Gastrocnemius medialis (tissue), 4 donors: ENCODE measurements at regions of chr9 and their contacts with region 1.

Region 1: DNA sequence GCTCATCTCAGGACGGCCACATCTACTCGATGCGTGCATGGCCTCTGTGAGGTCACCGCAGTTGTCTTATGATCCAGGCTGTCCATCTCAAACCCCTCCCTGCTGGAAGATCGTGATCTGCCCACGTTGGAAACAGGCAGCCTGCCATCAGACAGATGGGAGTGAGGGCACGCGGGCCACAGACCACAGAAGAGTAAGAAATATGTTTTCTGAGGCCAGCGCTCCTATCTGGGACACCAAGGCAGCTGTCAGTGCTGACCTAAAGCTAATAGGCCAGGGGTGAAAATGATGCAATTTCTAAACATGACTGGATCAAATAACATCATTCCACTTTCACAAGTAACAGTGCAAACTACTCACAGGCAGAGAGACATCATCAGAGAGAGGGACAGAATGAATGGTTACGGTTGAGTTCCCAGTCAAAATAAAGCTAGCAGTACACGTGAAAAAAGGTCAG is 57.1 kb upstream of the CER1 start:
- DNase-seq: peak; percentile 66 to 79
- ATAC-seq: peak; percentile 70 to 78
- H3K4me3 ChIP-seq: peak overlapping the region; percentile 20 to 34 (median 28)
- H3K27ac ChIP-seq: peak overlapping the region; percentile 77 to 94 (median 88)
- H3K4me1 ChIP-seq: peaks cover 27 to 51% of the 10 kb centered on the region in 2 donors
- H3K27me3 ChIP-seq: no peaks in the 10 kb centered on the region
- CTCF ChIP-seq: no peak
- POLR2A ChIP-seq: peak; percentile 28 to 58

Region 2: DNA sequence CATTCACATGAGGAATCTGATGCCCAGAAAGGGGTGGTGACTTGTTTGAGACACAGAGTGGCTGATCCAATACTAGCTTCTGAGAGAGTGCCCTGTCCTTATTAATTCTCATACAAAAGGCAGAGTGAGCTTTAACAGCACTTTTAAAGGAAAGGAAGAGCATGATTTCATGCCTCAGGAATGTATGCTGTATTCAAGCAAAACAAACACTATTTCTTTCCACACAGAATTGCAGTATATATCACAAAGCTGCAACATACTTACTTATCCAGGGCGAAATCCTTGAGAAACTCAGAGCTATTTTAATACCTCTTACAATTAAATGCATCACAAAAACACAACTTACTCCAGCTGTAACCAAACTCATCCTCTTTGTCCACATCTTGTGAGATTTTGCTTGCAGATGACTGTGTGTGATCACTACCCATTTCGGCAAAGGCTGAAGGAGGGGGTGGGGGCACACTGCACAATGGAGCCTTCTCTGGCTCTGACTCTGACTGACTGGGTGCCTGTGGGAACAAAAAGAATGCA is 1639.9 kb before region 1 on chr9:
- in situ Hi-C with region 1: no loop called
- intact Hi-C with region 1: loop called (anchors 10 kb)
- DNase-seq: no peak
- ATAC-seq: no peak
- H3K4me3 ChIP-seq: no peak overlapping the region
- H3K27ac ChIP-seq: no peak overlapping the region
- H3K4me1 ChIP-seq: peaks cover 29 to 35% of the 10 kb centered on the region in 2 donors
- H3K27me3 ChIP-seq: no peaks in the 10 kb centered on the region
- CTCF ChIP-seq: no peak
- POLR2A ChIP-seq: no peak

Region 3: GRCh38 chr9:14400658-14400995 is 379.0 kb before region 1 on chr9:
- in situ Hi-C with region 1: no loop called
- intact Hi-C with region 1: loop called (anchors 1 kb)
- DNase-seq: peak; percentile 19 to 55
- ATAC-seq: peak; percentile 74 to 85
- H3K4me3 ChIP-seq: peak overlapping the region in 2 of 4 donors; percentile 10 to 39
- H3K27ac ChIP-seq: peak overlapping the region; percentile 2 to 62 (median 10)
- H3K4me1 ChIP-seq: peaks cover 5 to 33% of the 10 kb centered on the region in 2 donors
- H3K27me3 ChIP-seq: no peaks in the 10 kb centered on the region
- CTCF ChIP-seq: peak; percentile 40 to 68 (median 56)
- POLR2A ChIP-seq: no peak

Region 4: DNA sequence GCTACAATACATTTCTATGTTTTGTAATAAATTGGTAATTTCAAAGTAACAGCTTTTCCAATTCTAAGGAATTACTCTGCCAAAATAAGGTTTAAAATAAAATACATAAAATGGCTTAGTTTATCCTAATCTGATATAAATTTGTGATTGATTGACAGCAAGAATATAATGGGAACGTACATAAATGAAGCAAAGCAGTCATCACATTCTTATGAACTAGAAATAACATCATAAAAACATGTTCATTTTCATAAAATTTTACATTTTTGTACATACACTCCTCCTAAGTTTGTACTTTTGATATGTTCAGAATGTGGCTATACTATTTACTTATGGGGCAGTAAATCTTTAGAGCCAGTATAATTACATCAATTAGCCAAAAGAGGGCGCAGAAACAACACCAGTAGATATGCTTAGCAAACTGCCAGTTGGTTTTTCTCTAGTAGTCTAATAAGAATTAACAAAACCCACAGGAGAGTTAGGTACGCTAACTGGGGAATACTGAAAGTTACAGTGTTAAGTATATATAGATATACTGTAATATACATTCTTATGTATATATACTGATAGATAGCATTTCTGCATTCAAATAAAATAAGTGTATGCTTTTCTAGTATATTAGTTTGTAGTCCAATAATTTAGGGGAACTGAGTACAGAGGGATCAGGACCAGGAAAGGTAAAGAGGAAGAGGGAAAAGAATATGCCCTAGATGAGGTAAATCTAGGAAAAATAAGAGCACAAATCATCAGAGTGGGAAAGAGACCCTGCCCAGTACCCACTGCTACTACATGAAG is 163.2 kb before region 1 on chr9:
- in situ Hi-C with region 1: loop called in 1 of 4 experiments (anchors 10 kb)
- intact Hi-C with region 1: no loop called
- DNase-seq: no peak
- ATAC-seq: peak in 1 of 2 donors; percentile 61
- H3K4me3 ChIP-seq: no peak overlapping the region
- H3K27ac ChIP-seq: no peak overlapping the region
- H3K4me1 ChIP-seq: no peaks in the 10 kb centered on the region
- H3K27me3 ChIP-seq: no peaks in the 10 kb centered on the region
- CTCF ChIP-seq: peak in 4 of 5 experiments; percentile 38 to 66 (median 46)
- POLR2A ChIP-seq: no peak

Region 5: DNA sequence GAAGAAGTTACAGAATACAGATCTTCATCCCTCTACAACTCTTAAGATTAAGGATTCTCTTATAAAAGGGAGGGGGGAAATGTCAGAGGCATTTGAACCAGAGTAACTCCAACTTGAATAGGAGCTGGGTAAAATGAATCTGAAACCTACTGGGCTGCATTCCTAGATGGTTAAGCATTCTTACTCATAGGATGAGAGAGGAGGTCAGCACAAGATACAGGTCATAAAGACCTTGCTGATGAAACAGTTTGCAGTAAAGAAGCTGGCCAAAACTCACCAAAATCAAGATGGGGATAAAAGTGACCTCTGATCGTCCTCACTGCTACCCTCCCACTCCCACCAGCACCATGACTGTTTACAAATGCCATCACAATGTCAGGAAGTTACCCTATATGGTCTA is 116.3 kb after region 1 on chr9:
- in situ Hi-C with region 1: no loop called
- intact Hi-C with region 1: no loop called
- DNase-seq: no peak
- ATAC-seq: no peak
- H3K4me3 ChIP-seq: no peak overlapping the region
- H3K27ac ChIP-seq: no peak overlapping the region
- H3K4me1 ChIP-seq: no peaks in the 10 kb centered on the region
- H3K27me3 ChIP-seq: no peaks in the 10 kb centered on the region
- CTCF ChIP-seq: no peak
- POLR2A ChIP-seq: no peak